ENCODE measurements at regions of chr9 and their contacts with region 1.

Region 1: GRCh38 chr9:72022841-72023240 is 37.6 kb downstream of the C9orf57 start:
- DNase-seq: peak in 1 of 2 experiments; percentile 70
- H3K4me3 ChIP-seq: no peak overlapping the region
- H3K27ac ChIP-seq: no peak overlapping the region
- H3K4me1 ChIP-seq: no peaks in the 10 kb centered on the region
- H3K27me3 ChIP-seq: no peaks in the 10 kb centered on the region
- CTCF ChIP-seq: no peak

Region 2: GRCh38 chr9:71285191-71285656 is 737.6 kb before region 1 on chr9:
- CTCF ChIA-PET with region 1: interaction called, 7 read pairs
- POLR2A ChIA-PET with region 1: no interaction called
- intact Hi-C with region 1: loop called (anchors 1 kb)
- DNase-seq: peak; percentile 49 to 55
- H3K4me3 ChIP-seq: no peak overlapping the region
- H3K27ac ChIP-seq: no peak overlapping the region
- H3K4me1 ChIP-seq: no peaks in the 10 kb centered on the region
- H3K27me3 ChIP-seq: no peaks in the 10 kb centered on the region
- CTCF ChIP-seq: peak; percentile 92

Region 3: DNA sequence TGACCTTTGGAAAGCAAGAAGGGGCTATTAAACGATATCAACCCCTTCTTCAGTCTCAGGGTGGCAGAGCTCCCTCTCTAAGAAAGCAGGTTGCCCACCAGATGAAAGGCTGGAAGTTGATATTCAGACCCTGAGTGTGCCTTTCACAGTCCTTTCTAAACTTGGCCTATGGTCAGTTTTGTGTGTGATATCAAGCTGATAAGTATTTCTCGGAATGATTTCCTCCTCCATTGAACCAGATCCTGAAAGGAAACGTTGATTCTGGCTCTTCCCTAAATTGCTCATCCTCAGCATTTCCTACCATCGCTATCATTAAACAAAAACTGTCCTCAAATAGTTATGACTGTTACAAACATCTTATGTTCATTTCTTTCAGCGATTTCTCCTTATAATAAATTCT is 384.9 kb before region 1 on chr9:
- CTCF ChIA-PET with region 1: interaction called, 20 read pairs
- POLR2A ChIA-PET with region 1: no interaction called
- intact Hi-C with region 1: no loop called
- DNase-seq: no peak
- H3K4me3 ChIP-seq: no peak overlapping the region
- H3K27ac ChIP-seq: no peak overlapping the region
- H3K4me1 ChIP-seq: no peaks in the 10 kb centered on the region
- H3K27me3 ChIP-seq: no peaks in the 10 kb centered on the region
- CTCF ChIP-seq: no peak

Region 4: DNA sequence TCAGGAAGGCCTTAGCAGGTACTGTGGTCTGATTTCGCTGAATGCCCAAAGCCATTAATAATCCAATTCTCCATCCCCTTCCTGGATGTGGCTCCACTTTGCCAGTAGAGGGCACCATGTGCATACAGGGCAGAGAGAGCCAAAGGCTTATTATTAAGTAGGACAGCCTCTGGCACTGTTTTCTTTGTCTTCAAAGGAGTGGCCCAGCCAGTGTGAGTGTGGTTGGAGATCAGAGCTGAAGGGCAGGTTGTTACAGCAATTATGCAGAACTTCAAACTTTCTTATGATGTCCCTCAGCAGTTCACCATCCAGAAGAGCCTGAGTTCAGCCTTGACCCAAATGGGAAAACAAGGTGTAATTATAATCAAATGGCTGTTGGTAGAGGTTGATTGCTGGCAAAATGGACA is 215.9 kb before region 1 on chr9:
- CTCF ChIA-PET with region 1: interaction called, 3 read pairs
- POLR2A ChIA-PET with region 1: no interaction called
- intact Hi-C with region 1: loop called (anchors 1 kb)
- DNase-seq: peak; percentile 66 to 79
- H3K4me3 ChIP-seq: no peak overlapping the region
- H3K27ac ChIP-seq: no peak overlapping the region
- H3K4me1 ChIP-seq: no peaks in the 10 kb centered on the region
- H3K27me3 ChIP-seq: no peaks in the 10 kb centered on the region
- CTCF ChIP-seq: peak; percentile 89

Region 5: DNA sequence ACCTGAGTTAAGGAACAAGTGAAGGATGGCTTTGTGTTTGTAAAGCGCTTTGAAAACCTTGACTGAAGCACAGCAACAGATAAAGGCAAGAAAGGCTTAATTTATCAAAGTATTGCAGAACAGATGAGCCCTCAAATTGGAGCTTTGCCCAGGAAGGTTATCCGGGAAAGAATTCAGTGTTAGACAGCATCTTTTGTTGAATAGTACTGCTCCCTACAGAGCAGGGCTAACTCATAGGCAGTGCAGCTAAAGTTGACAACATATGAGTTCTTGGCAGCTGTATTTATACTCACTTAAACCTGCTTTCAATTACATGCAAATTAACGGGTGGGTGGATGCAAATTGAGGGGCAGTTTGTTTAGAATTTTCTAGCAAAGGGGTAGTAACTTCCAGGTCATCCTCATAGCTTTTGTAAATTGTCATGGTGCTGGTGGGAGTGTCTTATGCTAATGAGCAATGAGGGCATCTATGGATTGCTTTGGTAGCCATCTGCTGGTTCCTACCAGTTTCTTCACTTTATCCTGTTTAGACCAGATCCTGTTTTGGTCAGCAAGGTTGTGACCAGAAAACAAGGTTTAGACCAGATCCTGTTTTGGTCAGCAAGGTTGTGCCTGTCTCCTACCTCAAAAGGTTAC is 232.2 kb after region 1 on chr9:
- CTCF ChIA-PET with region 1: no interaction called
- POLR2A ChIA-PET with region 1: interaction called, 28 read pairs
- intact Hi-C with region 1: no loop called
- DNase-seq: no peak
- H3K4me3 ChIP-seq: no peak overlapping the region
- H3K27ac ChIP-seq: no peak overlapping the region
- H3K4me1 ChIP-seq: no peaks in the 10 kb centered on the region
- H3K27me3 ChIP-seq: no peaks in the 10 kb centered on the region
- CTCF ChIP-seq: no peak

Measured in PC-9 (cell line).